HepG2 (cell line): ENCODE measurements at regions of chr2 and their contacts with region 1.

Region 1: DNA sequence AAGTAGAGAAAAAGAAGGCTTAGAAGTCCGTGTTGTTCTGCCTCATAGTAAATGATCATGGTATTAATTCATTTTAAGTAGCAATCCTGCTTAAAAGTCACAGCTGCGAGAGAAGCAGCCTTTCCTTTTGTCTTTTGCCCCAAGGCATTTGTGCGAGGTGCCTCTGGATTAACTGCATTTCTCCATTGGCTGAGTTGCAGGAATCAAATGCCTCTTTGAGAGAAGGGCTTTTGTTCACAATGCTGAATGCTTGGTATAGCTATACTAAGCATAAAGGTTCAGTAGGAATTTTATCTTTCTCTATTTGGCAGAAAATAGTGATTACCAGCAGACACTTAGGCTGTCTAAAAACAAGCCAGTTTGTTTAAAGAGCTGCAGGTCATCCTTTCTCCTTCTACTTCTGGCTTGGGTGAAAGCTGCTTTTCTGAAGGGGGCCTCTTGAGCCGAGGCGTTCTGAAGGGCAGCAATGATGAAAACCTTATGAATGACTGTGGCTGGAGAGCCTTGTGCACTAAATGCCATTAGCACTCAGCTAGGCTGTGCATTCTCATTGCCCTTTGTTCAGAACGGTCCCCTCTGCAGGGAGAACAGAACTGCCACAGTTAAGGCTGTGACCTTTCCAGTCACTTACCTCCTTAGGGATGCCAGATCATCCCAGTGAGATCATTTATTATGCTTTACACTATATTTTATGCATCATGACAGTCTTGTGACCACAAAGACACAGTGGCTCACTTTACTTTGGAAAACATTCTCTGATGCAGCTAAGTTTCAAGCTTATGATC is 68.8 kb upstream of the TMEM87B start:
- DNase-seq: peak; percentile 63
- ATAC-seq: peak; percentile 89
- H3K4me3 ChIP-seq: no peak overlapping the region
- H3K27ac ChIP-seq: peak overlapping the region; percentile 53
- H3K4me1 ChIP-seq: peaks cover 48% of the 10 kb centered on the region
- H3K27me3 ChIP-seq: no peaks in the 10 kb centered on the region
- CTCF ChIP-seq: 0 out of 2 replicates have a peak, but pooled peaks have one; percentile 8
- EP300 ChIP-seq: no peak
- POLR2A ChIP-seq: no peak
- RAD21 ChIP-seq: no peak

Region 2: DNA sequence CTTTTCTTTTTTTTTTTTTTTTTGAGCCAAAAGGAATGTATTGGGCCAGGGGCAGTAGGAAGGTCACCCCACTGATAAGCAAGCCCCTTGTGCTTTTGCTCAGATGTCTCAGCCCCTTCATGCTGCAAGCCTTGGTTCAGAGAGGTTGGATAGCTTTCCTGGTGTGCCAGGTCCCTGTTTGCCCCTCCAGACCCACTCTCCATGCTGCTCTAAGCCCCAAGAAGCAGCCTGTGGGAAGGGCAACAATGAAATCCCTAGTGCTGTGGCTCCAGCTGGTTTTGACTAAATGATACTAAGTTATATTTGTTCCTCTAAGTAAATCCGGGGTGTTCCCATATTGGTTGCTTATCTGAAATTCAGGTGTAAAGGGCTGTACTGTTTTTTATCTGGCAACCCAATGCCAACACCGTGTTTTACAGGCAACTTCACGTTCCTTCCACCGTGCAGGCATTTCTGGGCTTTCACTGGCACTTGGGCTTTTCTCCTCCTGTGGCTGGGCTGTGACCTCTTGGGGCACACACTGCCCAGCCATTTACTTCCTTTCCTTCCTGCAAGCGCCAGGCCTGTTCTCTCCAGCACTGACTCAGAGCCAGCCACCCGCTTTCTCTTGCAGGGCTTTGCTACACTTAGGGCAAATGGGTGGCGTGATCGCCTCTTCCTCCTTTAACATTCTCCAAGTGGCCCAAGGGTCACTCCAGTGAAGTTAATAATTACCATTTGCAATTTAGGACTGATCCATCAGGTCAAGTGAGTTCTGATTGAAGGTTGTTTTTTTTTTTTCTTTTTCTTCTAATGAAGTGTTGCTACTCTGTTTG is 66.3 kb before region 1 on chr2:
- CTCF ChIA-PET with region 1: no interaction called
- POLR2A ChIA-PET with region 1: interaction called, 8 read pairs
- in situ Hi-C with region 1: no loop called
- intact Hi-C with region 1: loop called (anchors 2 kb)
- DNase-seq: peak; percentile 94
- ATAC-seq: peak; percentile 96
- H3K4me3 ChIP-seq: peak overlapping the region; percentile 3 to 58 (median 15)
- H3K27ac ChIP-seq: peak overlapping the region; percentile 87
- H3K4me1 ChIP-seq: peaks cover 44% of the 10 kb centered on the region
- H3K27me3 ChIP-seq: no peaks in the 10 kb centered on the region
- CTCF ChIP-seq: peak; percentile 50
- EP300 ChIP-seq: peak in 1 of 2 experiments; percentile 76; a peak in 2 of 4 replicates
- POLR2A ChIP-seq: peak; percentile 84 to 91
- RAD21 ChIP-seq: peak; percentile 37

Region 3: DNA sequence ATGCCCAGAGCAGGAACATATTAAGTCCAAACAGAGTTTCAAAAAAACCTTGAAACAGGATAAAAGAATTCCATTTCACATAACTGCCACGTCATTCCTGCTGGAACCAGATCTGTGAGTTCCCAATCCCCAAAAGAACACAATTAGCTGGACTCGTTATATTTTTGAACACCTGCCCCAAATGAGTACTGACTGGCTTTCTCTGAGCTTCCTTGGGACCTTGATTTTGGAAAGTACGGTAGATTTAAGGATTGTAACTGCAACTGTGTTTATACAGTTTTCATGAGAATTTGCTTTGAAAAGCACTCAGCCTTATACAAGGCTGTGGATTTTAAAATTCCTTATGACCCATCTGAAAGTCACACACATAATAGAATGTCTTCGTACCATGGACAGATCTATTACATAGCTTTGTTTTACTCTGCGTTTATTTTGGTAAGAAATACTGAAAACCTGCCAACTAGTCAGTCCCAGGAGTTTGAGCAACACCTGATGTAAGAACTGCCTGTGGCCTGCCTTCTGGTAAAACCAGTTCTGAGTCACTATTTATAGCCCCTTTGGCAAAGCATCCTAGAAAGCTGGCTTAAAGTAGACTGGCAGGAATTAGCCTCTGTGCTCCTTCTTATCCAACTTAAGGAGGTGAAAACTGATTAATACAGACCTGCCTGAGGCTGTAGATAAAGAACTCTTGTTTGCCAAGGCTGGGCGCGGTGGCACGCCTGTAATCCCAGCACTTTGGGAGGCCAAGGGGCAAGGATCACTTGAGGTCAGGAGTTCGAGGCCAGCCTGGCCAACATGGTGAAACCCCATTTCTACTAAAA is 39.8 kb before region 1 on chr2:
- CTCF ChIA-PET with region 1: no interaction called
- POLR2A ChIA-PET with region 1: interaction called, 16 read pairs
- in situ Hi-C with region 1: no loop called
- intact Hi-C with region 1: no loop called
- DNase-seq: peak; percentile 70
- ATAC-seq: peak; percentile 35
- H3K4me3 ChIP-seq: no peak overlapping the region
- H3K27ac ChIP-seq: peak overlapping the region; percentile 67
- H3K4me1 ChIP-seq: peaks cover 74% of the 10 kb centered on the region
- H3K27me3 ChIP-seq: no peaks in the 10 kb centered on the region
- CTCF ChIP-seq: no peak
- EP300 ChIP-seq: 0 out of 4 replicates have a peak, but pooled peaks of 1 of the 2 experiments have one; percentile 4
- POLR2A ChIP-seq: no peak
- RAD21 ChIP-seq: no peak

Region 4: GRCh38 chr2:111958901-111959300 is 27.4 kb before region 1 on chr2:
- CTCF ChIA-PET with region 1: no interaction called
- POLR2A ChIA-PET with region 1: interaction called, 9 read pairs
- in situ Hi-C with region 1: no loop called
- intact Hi-C with region 1: loop called (anchors 2 kb)
- DNase-seq: no peak
- ATAC-seq: no peak
- H3K4me3 ChIP-seq: no peak overlapping the region
- H3K27ac ChIP-seq: no peak overlapping the region
- H3K4me1 ChIP-seq: peaks cover 70% of the 10 kb centered on the region
- H3K27me3 ChIP-seq: no peaks in the 10 kb centered on the region
- CTCF ChIP-seq: no peak
- EP300 ChIP-seq: no peak
- POLR2A ChIP-seq: no peak
- RAD21 ChIP-seq: no peak

Region 5: DNA sequence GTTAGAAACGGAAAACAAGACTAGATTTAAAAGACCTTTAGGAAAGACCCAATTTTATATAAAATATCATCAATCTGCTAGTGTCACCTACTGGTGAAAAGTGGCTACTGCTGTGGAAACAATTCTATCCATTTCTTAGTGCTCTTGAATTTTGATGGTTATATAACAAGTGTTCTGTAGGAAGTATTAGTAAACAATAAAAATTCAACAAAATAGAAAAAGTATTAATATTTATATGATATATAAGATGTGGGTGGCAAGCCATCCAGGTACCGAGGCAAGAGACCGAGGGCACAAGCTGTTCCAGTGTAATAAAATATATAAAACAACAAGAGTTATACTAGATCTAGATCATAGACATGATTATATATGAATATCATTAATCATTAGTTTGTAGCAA is 62.6 kb after region 1 on chr2:
- CTCF ChIA-PET with region 1: no interaction called
- POLR2A ChIA-PET with region 1: interaction called, 11 read pairs
- in situ Hi-C with region 1: no loop called
- intact Hi-C with region 1: loop called (anchors 2 kb)
- DNase-seq: peak; percentile 71
- ATAC-seq: no peak
- H3K4me3 ChIP-seq: peak overlapping the region in 1 of 3 experiments; percentile 49; a peak in 1 of 6 replicates
- H3K27ac ChIP-seq: no peak overlapping the region
- H3K4me1 ChIP-seq: peaks cover 39% of the 10 kb centered on the region
- H3K27me3 ChIP-seq: no peaks in the 10 kb centered on the region; a peak in 1 of 5 replicates
- CTCF ChIP-seq: peak; percentile 70
- EP300 ChIP-seq: no peak
- POLR2A ChIP-seq: no peak
- RAD21 ChIP-seq: no peak

Region 6: DNA sequence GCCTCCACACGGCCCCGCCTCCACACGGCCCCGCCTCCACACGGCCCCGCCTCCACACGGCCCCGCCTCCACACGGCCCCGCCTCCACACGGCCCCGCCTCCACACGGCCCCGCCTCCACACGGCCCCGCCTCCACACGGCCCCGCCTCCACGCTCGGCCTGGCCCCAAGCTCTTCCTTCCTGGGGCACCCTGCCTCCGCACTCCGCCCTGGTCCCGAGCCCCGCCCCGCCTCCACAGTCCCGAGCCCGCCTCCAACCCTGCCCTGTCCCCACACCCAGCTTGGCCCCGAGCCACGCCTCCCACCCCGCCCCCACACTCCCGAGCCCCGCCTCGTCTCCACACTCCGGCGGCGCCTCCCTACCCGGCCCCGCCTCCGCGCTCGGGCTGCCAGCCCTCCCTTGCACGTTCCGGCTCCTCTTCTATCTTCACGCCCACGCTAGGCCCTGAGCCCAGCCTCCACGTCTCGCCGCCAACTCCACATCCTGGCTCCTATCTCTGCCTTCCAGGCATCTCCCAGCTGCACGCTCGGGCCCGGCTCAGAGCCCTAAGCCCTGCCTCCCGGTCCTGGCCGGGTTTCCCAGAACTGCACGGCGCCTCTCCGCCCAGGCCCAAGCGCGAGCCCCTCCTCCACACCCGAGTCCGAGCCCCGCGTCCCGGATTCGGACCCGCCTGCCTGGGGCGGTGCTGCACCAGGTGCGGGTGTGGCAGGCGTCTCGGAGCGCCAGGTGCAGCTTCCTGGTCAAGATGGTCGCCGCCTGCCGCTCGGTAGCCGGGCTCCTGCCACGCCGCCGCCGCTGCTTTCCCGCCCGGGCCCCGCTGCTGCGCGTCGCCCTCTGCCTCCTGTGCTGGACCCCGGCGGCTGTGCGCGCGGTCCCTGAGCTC is 68.8 kb after region 1 on chr2 and contains the start of gene TMEM87B:
- CTCF ChIA-PET with region 1: no interaction called
- POLR2A ChIA-PET with region 1: interaction called, 11 read pairs
- in situ Hi-C with region 1: no loop called
- intact Hi-C with region 1: no loop called
- DNase-seq: peak; percentile 91
- ATAC-seq: peak; percentile 80
- H3K4me3 ChIP-seq: peak within 1 kb of the TSS; percentile 92 to 97 (median 95)
- H3K27ac ChIP-seq: peak within 1 kb of the TSS; percentile 95
- H3K4me1 ChIP-seq: peaks cover 38% of the 10 kb centered on the region
- H3K27me3 ChIP-seq: no peaks in the 10 kb centered on the region; a peak in 1 of 5 replicates
- CTCF ChIP-seq: peak; percentile 28; the same call in 1 of the 2 replicates
- EP300 ChIP-seq: no peak
- POLR2A ChIP-seq: peak; percentile 74 to 93
- RAD21 ChIP-seq: peak; percentile 60; the same call in 1 of the 2 replicates
- total RNA-seq, gene TMEM87B: 9.9 and 15.1 TPM in 2 replicates